Sciatic nerve (tissue), 2 donors: ENCODE measurements at regions of chr19 and their contacts with region 1.

Region 1: GRCh38 chr19:11995174-11995573 is 30.3 kb downstream of the ZNF763 start:
- DNase-seq: no peak
- ATAC-seq: no peak

Region 2: GRCh38 chr19:11798391-11799330 is 196.5 kb before region 1 on chr19 and contains the start of gene ZNF491:
- intact Hi-C with region 1: loop called (anchors 10 kb)
- DNase-seq: peak; percentile 94
- ATAC-seq: peak; percentile 99
- total RNA-seq, gene ZNF491: 4.2 TPM

Region 3: DNA sequence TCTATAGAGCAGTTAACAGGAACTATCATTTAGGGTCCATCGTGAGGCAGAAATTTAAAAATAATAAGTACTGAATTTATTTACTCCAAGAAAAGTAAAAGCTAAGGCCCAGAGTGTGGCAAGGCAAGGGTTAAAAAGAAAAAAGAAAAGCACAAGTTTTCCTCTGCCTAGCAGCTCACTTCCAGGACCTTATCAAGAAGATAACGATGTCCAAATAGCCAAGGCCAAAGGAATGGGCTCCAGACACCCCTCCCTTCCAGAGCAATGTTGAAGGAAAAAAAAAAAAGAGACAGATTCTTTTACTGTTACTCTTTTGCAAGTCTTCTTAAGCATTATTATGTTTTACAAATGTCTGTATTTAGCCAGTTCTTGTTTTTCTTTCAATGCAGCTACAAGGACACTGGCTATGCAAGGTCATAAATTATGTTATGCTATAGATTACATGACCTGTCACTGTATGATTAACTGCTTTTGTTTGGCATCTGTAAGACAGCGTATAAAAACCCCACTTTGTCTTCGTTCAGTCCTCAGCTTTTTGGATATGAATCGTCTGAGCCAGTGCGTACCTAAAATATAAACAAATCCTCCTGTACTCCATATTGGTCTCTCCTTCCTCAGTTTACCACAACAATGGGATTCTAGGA is 73.2 kb before region 1 on chr19:
- intact Hi-C with region 1: no loop called
- DNase-seq: no peak
- ATAC-seq: no peak

Region 4: DNA sequence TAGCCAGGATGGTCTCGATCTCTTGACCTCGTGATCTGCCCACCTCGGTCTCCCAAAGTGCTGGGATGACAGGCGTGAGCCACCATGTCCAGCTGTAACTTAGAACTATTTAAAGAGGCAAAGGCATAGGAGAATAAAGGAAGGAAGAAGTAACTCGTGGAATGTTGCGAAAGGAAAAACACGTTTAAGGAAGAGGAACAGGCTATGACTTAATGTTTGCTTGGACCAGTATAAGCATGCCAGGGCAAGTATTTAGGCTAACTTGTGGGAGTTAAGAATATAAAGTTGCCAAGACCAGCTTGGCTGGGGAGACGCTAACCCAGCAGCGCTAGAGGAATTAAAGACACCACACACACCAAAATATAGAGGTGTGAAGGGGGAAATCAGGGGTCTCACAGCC is 102.9 kb after region 1 on chr19:
- intact Hi-C with region 1: no loop called
- DNase-seq: no peak
- ATAC-seq: no peak